ENCODE measurements at regions of chr13 and their contacts with region 1.

Region 1: DNA sequence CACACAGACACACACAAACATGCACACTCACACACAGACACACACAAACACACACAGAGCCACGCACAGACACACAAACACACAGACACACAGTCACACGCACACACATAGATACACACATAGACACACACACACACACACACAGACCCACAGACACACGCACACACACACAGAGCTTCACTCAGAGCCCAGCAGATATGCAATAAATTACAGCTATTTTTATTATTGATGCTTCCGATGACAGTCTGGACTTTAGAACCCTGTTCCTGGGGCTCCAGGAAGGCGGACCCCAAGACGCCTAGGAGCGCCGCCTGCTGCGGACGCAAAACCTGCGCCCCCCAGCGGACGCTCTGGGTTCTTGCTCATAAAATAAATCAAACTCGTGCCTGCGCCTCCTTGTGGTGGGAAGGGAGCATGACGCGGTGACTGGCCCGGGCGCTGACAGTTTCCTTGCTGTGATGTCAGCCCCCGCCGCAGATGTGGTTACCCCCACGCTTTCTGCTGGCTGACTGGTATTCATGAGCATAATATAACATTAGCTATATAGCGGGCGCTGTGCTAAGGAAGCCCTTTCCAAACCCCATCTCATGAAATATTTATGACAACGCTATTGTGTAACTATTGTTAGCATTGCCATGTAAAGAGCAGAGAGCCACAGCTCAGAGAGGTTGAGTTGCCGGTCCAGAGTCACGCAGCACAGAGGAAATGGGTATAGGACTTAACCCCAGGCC is 64.4 kb upstream of the TM9SF2 start:
- DNase-seq: peak; percentile 85
- H3K4me3 ChIP-seq: no peak overlapping the region
- H3K27ac ChIP-seq: no peak overlapping the region
- H3K4me1 ChIP-seq: no peaks in the 10 kb centered on the region
- H3K27me3 ChIP-seq: no peaks in the 10 kb centered on the region
- CTCF ChIP-seq: peak; percentile 98

Region 2: GRCh38 chr13:99176309-99177276 is 260.3 kb before region 1 on chr13:
- intact Hi-C with region 1: loop called (anchors 5 kb)
- DNase-seq: peak; percentile 84
- H3K4me3 ChIP-seq: no peak overlapping the region
- H3K27ac ChIP-seq: no peak overlapping the region
- H3K4me1 ChIP-seq: no peaks in the 10 kb centered on the region
- H3K27me3 ChIP-seq: no peaks in the 10 kb centered on the region
- CTCF ChIP-seq: peak; percentile 86

Region 3: GRCh38 chr13:99269627-99270241 is 167.1 kb before region 1 on chr13:
- intact Hi-C with region 1: loop called (anchors 2 kb)
- DNase-seq: no peak
- H3K4me3 ChIP-seq: no peak overlapping the region
- H3K27ac ChIP-seq: no peak overlapping the region
- H3K4me1 ChIP-seq: no peaks in the 10 kb centered on the region
- H3K27me3 ChIP-seq: no peaks in the 10 kb centered on the region
- CTCF ChIP-seq: peak; percentile 54

Region 4: DNA sequence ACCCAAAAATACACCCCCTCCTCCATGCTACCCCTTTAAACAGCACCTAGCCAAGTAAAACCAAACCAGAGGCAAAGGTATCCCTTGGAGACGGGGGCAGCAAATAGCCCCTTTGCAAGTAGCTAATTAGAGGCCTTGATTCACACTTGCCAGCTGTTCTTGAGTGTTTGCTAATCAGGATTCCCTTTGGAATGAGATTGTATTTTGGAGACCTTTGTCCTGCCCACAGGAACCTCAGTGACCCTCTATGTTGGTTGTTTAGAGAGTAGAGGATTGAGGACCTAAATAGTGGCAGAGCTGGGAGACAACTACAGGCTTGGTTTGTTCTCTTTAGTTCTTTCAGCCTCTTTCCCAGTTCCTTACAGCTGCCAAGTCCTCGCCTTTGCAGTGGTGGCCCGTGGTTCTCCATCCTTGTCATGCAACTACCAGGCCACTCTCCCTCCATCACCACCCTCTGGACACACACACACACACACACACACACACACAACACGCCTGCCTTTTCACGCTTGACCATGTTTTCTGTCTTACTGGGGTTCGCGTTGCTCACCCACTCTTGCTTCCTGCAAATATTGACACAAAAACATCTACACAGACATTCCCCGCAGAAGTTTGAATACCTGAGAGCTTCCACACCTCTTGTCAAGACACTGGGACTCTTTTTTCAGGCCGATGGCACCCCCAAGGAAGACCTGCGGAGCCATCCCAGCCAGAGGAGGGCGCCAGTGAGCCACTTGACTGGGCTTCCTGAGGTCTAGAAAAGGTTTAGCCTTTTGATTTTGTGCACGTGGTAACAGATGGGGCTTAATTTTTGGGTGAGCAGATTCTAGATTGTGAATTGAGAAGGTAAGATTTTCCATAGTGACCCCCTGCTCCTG is 49.7 kb before region 1 on chr13:
- intact Hi-C with region 1: loop called (anchors 1 kb)
- DNase-seq: peak; percentile 70
- H3K4me3 ChIP-seq: no peak overlapping the region
- H3K27ac ChIP-seq: no peak overlapping the region
- H3K4me1 ChIP-seq: no peaks in the 10 kb centered on the region
- H3K27me3 ChIP-seq: no peaks in the 10 kb centered on the region
- CTCF ChIP-seq: peak; percentile 42

Region 5: DNA sequence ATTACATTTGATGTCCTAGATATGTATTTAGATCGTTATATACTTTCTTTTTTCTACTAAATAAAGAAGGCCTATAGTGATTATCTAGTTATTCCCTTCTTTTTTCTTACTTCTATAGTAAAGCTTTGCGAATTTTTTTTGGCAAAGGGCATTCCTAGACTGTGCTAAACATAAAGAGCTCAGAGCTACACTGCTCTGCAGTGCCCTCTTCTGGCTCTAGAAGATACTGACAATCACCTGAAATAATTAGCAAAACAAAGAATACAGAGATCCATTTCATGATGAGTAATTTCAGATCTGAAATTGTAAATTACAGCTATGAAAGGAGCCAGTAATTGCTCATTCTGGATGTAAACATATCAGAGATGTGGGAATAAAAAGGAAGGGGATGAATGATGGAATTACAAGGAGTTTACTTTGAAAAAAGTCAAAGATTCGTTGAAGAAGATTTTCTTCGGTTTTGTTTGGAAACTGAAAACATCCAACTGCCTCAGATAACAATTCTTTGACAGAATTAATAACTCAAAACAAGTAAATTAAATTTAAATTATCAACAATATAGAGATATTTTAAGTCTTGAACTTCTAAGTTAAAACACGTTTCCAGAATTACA is 1691.0 kb after region 1 on chr13:
- intact Hi-C with region 1: no loop called
- DNase-seq: no peak
- H3K4me3 ChIP-seq: no peak overlapping the region
- H3K27ac ChIP-seq: no peak overlapping the region
- H3K4me1 ChIP-seq: no peaks in the 10 kb centered on the region
- H3K27me3 ChIP-seq: no peaks in the 10 kb centered on the region
- CTCF ChIP-seq: peak; percentile 63